Ovary (tissue), 10 donors: ENCODE measurements at regions of chr12 and their contacts with region 1.

Region 1: GRCh38 chr12:1795785-1796514 is 24.4 kb upstream of the LRTM2 start:
- DNase-seq: peak; percentile 90 to 94 (median 92)
- H3K4me3 ChIP-seq: peak overlapping the region; percentile 46
- H3K27ac ChIP-seq: no peak overlapping the region
- H3K4me1 ChIP-seq: peaks cover 3% of the 10 kb centered on the region
- H3K27me3 ChIP-seq: no peaks in the 10 kb centered on the region
- CTCF ChIP-seq: peak; percentile 99 to 100 (median 99)
- EP300 ChIP-seq: no peak
- POLR2A ChIP-seq: peak; percentile 37

Region 2: DNA sequence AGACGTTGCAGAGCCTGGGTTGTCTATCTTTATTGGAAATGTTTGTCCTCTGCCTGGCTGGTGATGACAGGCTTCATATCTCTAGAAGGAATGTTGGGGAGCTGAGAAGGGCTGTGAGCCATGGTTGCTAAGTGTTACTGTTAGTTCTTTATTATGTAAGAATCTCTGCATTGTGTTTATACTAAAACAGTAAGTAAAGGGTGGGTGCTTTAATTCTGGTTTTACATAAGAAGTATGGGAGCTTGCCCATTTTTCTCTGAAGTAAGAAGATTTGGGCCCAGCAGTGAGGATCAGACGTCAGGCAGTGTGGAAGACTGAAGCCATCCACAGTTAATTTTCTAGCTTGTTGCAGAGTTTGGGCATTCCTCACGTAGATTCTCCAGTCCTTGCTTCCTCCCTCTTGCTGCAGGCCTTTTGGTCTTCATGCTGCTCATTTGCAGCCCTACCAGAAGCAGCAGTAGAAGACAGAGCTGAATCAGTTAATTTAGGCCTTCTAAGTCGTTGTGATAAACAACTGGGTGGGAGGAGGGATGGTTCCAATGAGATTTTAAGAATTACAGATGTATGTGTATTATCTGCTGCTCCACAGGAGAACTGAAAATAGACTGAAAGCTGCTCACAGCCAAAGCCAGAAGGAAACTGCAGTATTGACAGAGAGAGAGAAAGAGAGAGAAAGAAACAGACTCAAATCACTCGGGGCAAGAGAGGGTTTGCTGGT is 145.5 kb before region 1 on chr12:
- intact Hi-C with region 1: loop called (anchors 2 to 5 kb)
- DNase-seq: no peak
- H3K4me3 ChIP-seq: no peak overlapping the region
- H3K27ac ChIP-seq: peak overlapping the region; percentile 44 to 79
- H3K4me1 ChIP-seq: peaks cover 4% of the 10 kb centered on the region
- H3K27me3 ChIP-seq: no peaks in the 10 kb centered on the region
- CTCF ChIP-seq: no peak
- EP300 ChIP-seq: no peak
- POLR2A ChIP-seq: no peak

Region 3: DNA sequence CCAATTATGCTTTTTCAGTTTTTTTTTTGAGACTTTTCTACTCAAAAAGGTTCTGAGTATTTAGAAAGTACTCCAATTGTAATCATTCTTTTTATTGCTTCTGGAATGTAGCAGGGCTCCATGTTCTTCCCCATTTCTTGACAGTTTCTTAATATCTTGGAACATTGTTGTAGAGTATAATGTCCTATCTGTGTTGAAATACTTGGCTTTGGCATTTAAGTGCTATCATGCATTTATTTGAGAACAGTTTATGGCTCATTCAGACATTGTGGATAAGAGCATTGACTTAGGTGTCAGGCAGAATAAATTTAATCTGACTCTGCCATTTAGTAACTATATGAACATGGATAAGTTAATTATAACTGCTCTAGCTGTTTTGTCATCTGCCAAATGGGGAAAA is 76.8 kb before region 1 on chr12:
- intact Hi-C with region 1: no loop called
- DNase-seq: no peak
- H3K4me3 ChIP-seq: no peak overlapping the region
- H3K27ac ChIP-seq: no peak overlapping the region
- H3K4me1 ChIP-seq: no peaks in the 10 kb centered on the region
- H3K27me3 ChIP-seq: no peaks in the 10 kb centered on the region
- CTCF ChIP-seq: no peak
- EP300 ChIP-seq: no peak
- POLR2A ChIP-seq: no peak

Region 4: DNA sequence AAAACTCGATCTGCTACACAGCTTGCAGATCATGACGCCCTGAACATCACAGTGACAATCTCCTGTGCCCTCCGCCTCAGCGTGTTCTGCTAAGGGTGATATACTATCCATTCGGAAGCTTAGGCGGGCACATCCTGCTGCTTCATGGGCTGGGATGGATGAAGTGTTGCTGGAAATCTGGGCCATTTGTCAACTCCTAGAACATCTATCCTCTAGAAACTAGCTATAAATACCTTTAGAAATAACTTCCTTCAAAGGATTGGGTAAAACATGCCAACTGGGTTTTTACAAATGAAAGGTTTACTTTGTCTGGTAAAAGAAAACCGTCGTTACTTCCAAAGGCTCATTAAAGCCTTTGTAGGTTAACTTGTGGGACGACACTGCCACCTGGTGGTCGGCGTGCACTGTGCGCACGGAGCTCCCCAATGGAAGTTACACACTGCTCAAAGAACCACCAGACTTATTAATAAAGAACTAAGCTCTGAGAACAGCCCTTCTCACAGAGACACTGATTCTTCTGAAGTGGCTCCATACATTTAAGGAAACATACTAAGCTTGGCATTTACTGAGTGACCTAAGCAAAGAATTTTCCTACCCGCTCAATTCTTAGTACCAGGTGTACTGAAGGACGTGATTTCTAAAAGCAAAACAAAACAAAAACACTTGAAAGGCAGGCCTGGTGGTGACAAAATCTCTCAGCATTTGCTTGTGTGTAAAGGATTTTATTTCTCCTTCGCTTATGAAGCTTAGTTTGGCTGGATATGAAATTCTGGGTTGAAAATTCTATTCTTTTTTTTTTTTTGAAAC is 144.1 kb after region 1 on chr12:
- intact Hi-C with region 1: loop called in 3 of 4 experiments (anchors 2 to 5 kb)
- DNase-seq: peak; percentile 79 to 93 (median 92)
- H3K4me3 ChIP-seq: peak overlapping the region; percentile 8
- H3K27ac ChIP-seq: no peak overlapping the region
- H3K4me1 ChIP-seq: peaks cover 8% of the 10 kb centered on the region
- H3K27me3 ChIP-seq: no peaks in the 10 kb centered on the region
- CTCF ChIP-seq: peak; percentile 81 to 90 (median 89)
- EP300 ChIP-seq: no peak
- POLR2A ChIP-seq: peak; percentile 11

Region 5: GRCh38 chr12:2034633-2035430 is 238.9 kb after region 1 on chr12:
- intact Hi-C with region 1: loop called (anchors 5 to 10 kb)
- DNase-seq: peak; percentile 79 to 94 (median 89)
- H3K4me3 ChIP-seq: peak overlapping the region; percentile 37
- H3K27ac ChIP-seq: no peak overlapping the region
- H3K4me1 ChIP-seq: no peaks in the 10 kb centered on the region
- H3K27me3 ChIP-seq: no peaks in the 10 kb centered on the region
- CTCF ChIP-seq: peak; percentile 89 to 94 (median 92)
- EP300 ChIP-seq: no peak
- POLR2A ChIP-seq: no peak

Region 6: DNA sequence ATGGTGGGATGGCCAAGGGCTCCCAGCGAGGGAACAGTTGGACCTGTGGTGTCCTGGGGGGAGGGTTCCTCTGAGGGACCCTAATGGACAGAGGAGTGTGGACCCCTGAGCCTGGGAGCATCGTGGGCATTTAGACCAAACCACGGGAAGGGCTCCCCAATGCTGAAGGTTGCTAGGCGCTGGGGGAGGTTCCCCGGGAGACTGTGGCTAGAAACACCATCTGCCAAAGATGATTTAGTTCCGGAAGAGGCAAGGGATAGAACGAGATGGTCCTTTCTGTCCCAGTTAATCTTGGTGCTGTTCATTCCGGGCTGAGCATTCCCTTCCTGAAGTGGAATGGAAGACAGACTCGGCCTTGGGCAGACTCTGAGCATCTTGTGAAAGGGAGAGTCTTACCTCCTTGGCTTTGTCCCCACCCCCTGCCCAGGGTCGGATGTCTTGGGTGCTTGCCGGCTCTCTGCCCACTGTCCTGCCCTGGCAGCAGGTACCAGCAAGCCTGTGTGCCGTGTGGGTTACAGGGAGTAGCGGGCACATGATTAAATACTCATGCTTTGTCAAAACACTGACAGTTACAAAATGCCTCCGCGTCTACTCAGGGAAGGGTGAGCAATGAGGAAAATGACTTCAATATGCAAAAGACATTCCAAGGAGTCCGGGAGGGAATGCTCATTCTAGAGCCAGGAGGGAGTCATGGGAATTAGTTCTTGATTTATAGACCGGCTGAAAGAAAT is 472.8 kb after region 1 on chr12:
- intact Hi-C with region 1: loop called in 1 of 4 experiments (anchors 10 kb)
- DNase-seq: no peak
- H3K4me3 ChIP-seq: no peak overlapping the region
- H3K27ac ChIP-seq: no peak overlapping the region
- H3K4me1 ChIP-seq: peaks cover under 1% of the 10 kb centered on the region
- H3K27me3 ChIP-seq: no peaks in the 10 kb centered on the region
- CTCF ChIP-seq: no peak
- EP300 ChIP-seq: no peak
- POLR2A ChIP-seq: no peak

Region 7: DNA sequence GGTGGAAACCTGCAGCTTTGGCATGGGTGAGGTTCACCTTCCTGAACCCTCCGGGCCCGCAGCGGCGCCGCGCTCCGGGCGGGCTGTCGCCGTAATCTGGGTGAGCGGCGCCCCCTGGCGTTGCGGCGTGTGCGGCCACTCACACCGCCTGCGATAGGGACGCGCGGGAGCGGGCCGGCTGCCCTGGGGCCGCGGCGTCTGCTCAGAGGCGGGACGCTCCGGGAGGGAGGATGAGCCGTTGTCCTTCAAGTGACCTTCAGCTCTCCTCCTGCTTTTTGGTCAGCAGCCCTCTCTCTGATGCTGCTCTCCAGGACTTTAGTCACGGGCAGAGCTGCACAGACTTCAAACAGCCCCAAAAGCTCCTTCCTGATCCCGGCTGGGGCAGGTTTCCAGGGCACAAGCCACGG is 787.1 kb after region 1 on chr12:
- intact Hi-C with region 1: loop called in 2 of 4 experiments (anchors 5 kb)
- DNase-seq: peak; percentile 26 to 78 (median 69)
- H3K4me3 ChIP-seq: no peak overlapping the region
- H3K27ac ChIP-seq: no peak overlapping the region
- H3K4me1 ChIP-seq: peaks cover 2% of the 10 kb centered on the region
- H3K27me3 ChIP-seq: no peaks in the 10 kb centered on the region
- CTCF ChIP-seq: peak; percentile 24 to 72 (median 72)
- EP300 ChIP-seq: no peak
- POLR2A ChIP-seq: no peak